Adrenal gland (tissue), 19 donors: ENCODE measurements at regions of chr2 and their contacts with region 1.

Region 1: DNA sequence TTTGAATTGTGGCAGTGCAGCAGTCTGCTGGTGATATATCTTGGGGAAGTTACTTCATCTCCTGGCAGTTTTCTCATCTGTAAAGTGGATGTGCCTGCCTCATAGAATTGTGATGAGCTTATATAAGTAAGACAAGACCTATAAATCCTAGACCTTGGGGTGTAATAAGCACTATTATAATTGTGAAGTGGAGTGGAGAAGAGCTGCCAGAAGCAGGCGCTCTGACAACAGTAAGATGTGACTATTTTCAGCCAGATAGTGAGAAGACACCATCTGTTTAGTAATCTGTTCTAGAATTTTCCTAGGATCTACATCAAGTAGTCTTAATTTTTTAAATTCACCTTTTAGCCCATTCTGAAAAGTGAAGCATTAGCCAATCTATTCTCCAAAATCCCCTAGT is 85.6 kb upstream of the TSPYL6 start:
- DNase-seq: no peak
- H3K4me3 ChIP-seq: no peak overlapping the region
- H3K27ac ChIP-seq: no peak overlapping the region
- H3K4me1 ChIP-seq: no peaks in the 10 kb centered on the region
- H3K27me3 ChIP-seq: no peaks in the 10 kb centered on the region
- CTCF ChIP-seq: no peak
- POLR2A ChIP-seq: no peak

Region 2: GRCh38 chr2:54429811-54430551 is 88.3 kb after region 1 on chr2:
- intact Hi-C with region 1: loop called in 1 of 2 experiments (anchors 10 kb)
- DNase-seq: no peak
- H3K4me3 ChIP-seq: no peak overlapping the region
- H3K27ac ChIP-seq: peak overlapping the region in 3 of 5 donors; percentile 45 to 62 (median 55)
- H3K4me1 ChIP-seq: no peaks in the 10 kb centered on the region
- H3K27me3 ChIP-seq: no peaks in the 10 kb centered on the region
- CTCF ChIP-seq: no peak
- POLR2A ChIP-seq: no peak